ENCODE measurements at regions of chr12 and their contacts with region 1.

Region 1: DNA sequence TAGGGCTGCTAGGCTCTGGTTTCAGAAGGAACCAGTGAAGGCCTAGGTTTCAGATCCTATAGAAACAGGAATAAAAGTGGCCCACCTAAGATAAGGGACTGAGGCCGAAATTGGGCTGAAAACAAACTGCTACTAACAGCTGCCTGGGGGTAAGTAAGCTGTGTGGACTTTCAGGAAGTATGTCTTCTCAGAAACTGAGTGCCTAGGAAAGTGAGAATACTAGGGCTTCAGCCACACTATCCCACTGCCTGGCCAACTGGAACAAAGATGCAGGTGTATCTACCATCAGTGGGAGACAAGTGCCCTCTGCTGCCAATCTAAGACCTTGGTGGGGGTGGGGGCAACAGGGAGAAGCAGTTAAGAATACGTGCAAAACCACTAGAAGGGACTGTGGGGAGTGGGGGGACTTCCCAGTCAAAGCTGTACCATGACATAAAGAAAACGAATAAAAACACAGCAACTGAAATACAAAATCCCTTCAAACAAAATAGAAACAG is 82.5 kb downstream of the MED13L start:
- DNase-seq: peak in 7 of 9 experiments; percentile 7 to 89 (median 55)
- ATAC-seq: peak; percentile 99
- H3K4me3 ChIP-seq: no peak overlapping the region
- H3K4me3 Mint-ChIP-seq: peak overlapping the region; percentile 27
- H3K27ac ChIP-seq: no peak overlapping the region
- H3K27ac Mint-ChIP-seq: peak overlapping the region; percentile 49
- H3K4me1 ChIP-seq: peaks cover 19% of the 10 kb centered on the region
- H3K4me1 Mint-ChIP-seq: peaks cover 69% of the 10 kb centered on the region
- H3K27me3 ChIP-seq: no peaks in the 10 kb centered on the region
- H3K27me3 Mint-ChIP-seq: no peaks in the 10 kb centered on the region
- CTCF ChIP-seq: no peak

Region 2: GRCh38 chr12:116015525-116015924 is 179.5 kb before region 1 on chr12:
- CTCF ChIA-PET with region 1: interaction called, 4 read pairs
- POLR2A ChIA-PET with region 1: no interaction called
- intact Hi-C with region 1: loop called in 1 of 2 experiments (anchors 10 kb)
- DNase-seq: peak in 2 of 9 experiments; percentile 7 to 30
- ATAC-seq: no peak
- H3K4me3 ChIP-seq: no peak overlapping the region
- H3K4me3 Mint-ChIP-seq: no peak overlapping the region
- H3K27ac ChIP-seq: no peak overlapping the region
- H3K27ac Mint-ChIP-seq: peak overlapping the region; percentile 2
- H3K4me1 ChIP-seq: no peaks in the 10 kb centered on the region
- H3K4me1 Mint-ChIP-seq: no peaks in the 10 kb centered on the region
- H3K27me3 ChIP-seq: no peaks in the 10 kb centered on the region
- H3K27me3 Mint-ChIP-seq: no peaks in the 10 kb centered on the region
- CTCF ChIP-seq: peak; percentile 35

Region 3: GRCh38 chr12:116066381-116067230 is 128.4 kb before region 1 on chr12:
- CTCF ChIA-PET with region 1: no interaction called
- POLR2A ChIA-PET with region 1: no interaction called
- intact Hi-C with region 1: loop called (anchors 5 to 10 kb)
- DNase-seq: peak; percentile 8 to 78 (median 59)
- ATAC-seq: peak; percentile 88
- H3K4me3 ChIP-seq: no peak overlapping the region
- H3K4me3 Mint-ChIP-seq: no peak overlapping the region
- H3K27ac ChIP-seq: no peak overlapping the region
- H3K27ac Mint-ChIP-seq: no peak overlapping the region
- H3K4me1 ChIP-seq: no peaks in the 10 kb centered on the region
- H3K4me1 Mint-ChIP-seq: peaks cover 26% of the 10 kb centered on the region
- H3K27me3 ChIP-seq: no peaks in the 10 kb centered on the region
- H3K27me3 Mint-ChIP-seq: no peaks in the 10 kb centered on the region
- CTCF ChIP-seq: peak; percentile 83

Region 4: GRCh38 chr12:116142936-116143898 is 51.8 kb before region 1 on chr12:
- CTCF ChIA-PET with region 1: no interaction called
- POLR2A ChIA-PET with region 1: no interaction called
- intact Hi-C with region 1: no loop called
- DNase-seq: peak in 1 of 9 experiments; percentile 29
- ATAC-seq: peak; percentile 34
- H3K4me3 ChIP-seq: no peak overlapping the region
- H3K4me3 Mint-ChIP-seq: peak overlapping the region; percentile 22
- H3K27ac ChIP-seq: no peak overlapping the region
- H3K27ac Mint-ChIP-seq: peak overlapping the region; percentile 74
- H3K4me1 ChIP-seq: peaks cover 9% of the 10 kb centered on the region
- H3K4me1 Mint-ChIP-seq: peaks cover 56% of the 10 kb centered on the region
- H3K27me3 ChIP-seq: no peaks in the 10 kb centered on the region
- H3K27me3 Mint-ChIP-seq: no peaks in the 10 kb centered on the region
- CTCF ChIP-seq: no peak

Region 5: DNA sequence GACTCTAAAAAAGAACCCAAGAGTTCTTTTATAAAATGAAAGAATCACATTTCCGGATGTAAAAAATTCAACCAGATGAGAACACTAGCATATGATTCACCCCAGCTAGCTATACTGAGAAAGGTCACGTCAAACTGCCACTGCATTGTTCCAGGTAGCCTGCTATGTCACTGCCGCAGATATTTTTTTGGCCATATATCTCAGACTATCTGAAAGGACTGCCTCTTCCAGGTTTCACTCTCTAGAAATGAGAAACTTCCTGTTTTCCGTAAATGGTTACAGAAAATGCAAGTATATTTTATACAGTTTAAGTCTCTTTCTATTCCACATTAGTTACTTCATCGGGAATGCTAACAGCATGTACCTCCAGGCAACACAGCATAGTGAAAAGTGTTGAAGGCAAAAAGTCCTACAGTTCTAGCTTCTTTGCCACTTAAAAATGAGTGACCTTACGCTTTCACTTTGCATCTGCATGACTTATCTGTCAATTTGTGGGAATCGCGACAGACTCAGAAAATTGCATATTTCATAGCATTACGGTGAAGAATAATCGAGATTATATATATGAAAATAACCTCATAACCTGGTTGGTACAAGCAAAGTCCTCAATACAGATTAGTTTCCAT is 22.6 kb before region 1 on chr12:
- CTCF ChIA-PET with region 1: no interaction called
- POLR2A ChIA-PET with region 1: no interaction called
- intact Hi-C with region 1: no loop called
- DNase-seq: peak in 2 of 9 experiments; percentile 14 to 32
- ATAC-seq: peak; percentile 95
- H3K4me3 ChIP-seq: peak overlapping the region in 1 of 2 experiments; percentile 25
- H3K4me3 Mint-ChIP-seq: peak overlapping the region; percentile 73
- H3K27ac ChIP-seq: peak overlapping the region in 1 of 2 experiments; percentile 29
- H3K27ac Mint-ChIP-seq: peak overlapping the region; percentile 45
- H3K4me1 ChIP-seq: peaks cover 19% of the 10 kb centered on the region
- H3K4me1 Mint-ChIP-seq: peaks cover 79% of the 10 kb centered on the region
- H3K27me3 ChIP-seq: no peaks in the 10 kb centered on the region
- H3K27me3 Mint-ChIP-seq: no peaks in the 10 kb centered on the region
- CTCF ChIP-seq: no peak

Region 6: DNA sequence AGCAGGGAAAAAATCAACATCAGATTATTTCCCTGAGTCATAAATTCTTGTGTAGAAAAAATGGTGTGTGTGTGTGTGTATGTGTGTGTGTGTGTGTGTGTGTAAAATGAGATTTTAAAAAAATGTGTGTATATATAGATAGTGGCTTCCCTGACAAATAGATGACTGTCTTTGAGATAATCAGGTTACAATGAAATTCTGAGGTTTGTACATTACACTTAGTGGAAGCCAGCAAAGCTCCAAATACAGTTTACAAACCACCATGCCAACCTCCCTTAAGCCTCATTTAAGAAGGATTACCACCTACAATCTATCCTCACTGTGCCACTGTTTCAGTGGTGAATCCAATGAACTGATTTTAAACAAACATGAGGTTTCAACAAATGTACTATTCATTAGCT is 11.2 kb before region 1 on chr12:
- CTCF ChIA-PET with region 1: no interaction called
- POLR2A ChIA-PET with region 1: no interaction called
- intact Hi-C with region 1: no loop called
- DNase-seq: no peak
- ATAC-seq: no peak
- H3K4me3 ChIP-seq: no peak overlapping the region
- H3K4me3 Mint-ChIP-seq: no peak overlapping the region
- H3K27ac ChIP-seq: no peak overlapping the region
- H3K27ac Mint-ChIP-seq: no peak overlapping the region
- H3K4me1 ChIP-seq: peaks cover 31% of the 10 kb centered on the region
- H3K4me1 Mint-ChIP-seq: peaks cover 84% of the 10 kb centered on the region
- H3K27me3 ChIP-seq: no peaks in the 10 kb centered on the region
- H3K27me3 Mint-ChIP-seq: no peaks in the 10 kb centered on the region
- CTCF ChIP-seq: no peak

Region 7: GRCh38 chr12:116244001-116244400 is 49.0 kb after region 1 on chr12:
- CTCF ChIA-PET with region 1: no interaction called
- POLR2A ChIA-PET with region 1: no interaction called
- intact Hi-C with region 1: loop called in 1 of 2 experiments (anchors 10 kb)
- DNase-seq: peak in 2 of 9 experiments; percentile 7 to 41
- ATAC-seq: peak; percentile 26
- H3K4me3 ChIP-seq: no peak overlapping the region
- H3K4me3 Mint-ChIP-seq: no peak overlapping the region
- H3K27ac ChIP-seq: no peak overlapping the region
- H3K27ac Mint-ChIP-seq: no peak overlapping the region
- H3K4me1 ChIP-seq: peaks cover 48% of the 10 kb centered on the region
- H3K4me1 Mint-ChIP-seq: peaks cover 78% of the 10 kb centered on the region
- H3K27me3 ChIP-seq: no peaks in the 10 kb centered on the region
- H3K27me3 Mint-ChIP-seq: no peaks in the 10 kb centered on the region
- CTCF ChIP-seq: no peak

Region 8: DNA sequence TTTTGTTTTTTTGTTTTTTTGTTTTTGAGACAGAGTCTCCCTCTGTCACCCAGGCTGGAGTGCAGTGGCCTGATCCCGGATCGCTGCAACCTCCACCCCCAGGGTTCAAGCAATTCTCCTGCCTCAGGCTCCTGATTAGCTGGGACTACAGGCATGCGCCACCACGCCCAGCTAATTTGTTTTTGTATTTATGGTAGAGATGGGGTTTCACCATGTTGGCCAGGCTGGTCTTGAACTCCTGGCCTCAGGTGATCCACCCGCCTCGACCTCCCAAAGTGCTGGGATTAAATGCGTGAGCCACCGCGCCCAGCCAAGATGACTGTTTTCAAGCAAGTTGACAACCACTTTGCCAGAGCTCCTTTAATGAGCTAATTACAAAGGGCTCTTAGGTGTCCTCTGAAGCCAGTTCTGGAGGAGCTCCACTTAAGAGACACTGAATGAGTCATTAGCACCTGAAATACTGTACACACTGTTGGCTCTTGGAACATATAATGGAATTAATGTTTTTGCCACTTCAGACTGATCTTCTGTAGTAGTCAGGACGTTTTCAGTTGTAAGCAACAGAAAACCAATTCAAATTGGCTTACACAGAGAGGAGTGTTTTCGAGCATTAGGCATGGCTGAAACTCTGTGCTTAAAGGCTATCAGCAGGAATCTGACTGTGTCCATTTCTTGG is 137.9 kb after region 1 on chr12:
- CTCF ChIA-PET with region 1: no interaction called
- POLR2A ChIA-PET with region 1: no interaction called
- intact Hi-C with region 1: no loop called
- DNase-seq: no peak
- ATAC-seq: no peak
- H3K4me3 ChIP-seq: no peak overlapping the region
- H3K4me3 Mint-ChIP-seq: no peak overlapping the region
- H3K27ac ChIP-seq: no peak overlapping the region
- H3K27ac Mint-ChIP-seq: no peak overlapping the region
- H3K4me1 ChIP-seq: no peaks in the 10 kb centered on the region
- H3K4me1 Mint-ChIP-seq: no peaks in the 10 kb centered on the region
- H3K27me3 ChIP-seq: no peaks in the 10 kb centered on the region
- H3K27me3 Mint-ChIP-seq: no peaks in the 10 kb centered on the region
- CTCF ChIP-seq: no peak